Breast epithelium (tissue), 4 donors: ENCODE measurements at regions of chr2 and their contacts with region 1.

Region 1: GRCh38 chr2:11129598-11130449 is 25.4 kb upstream of the SLC66A3 start:
- DNase-seq: peak; percentile 48 to 65
- H3K4me3 ChIP-seq: peak overlapping the region; percentile 17 to 65 (median 55)
- H3K27ac ChIP-seq: peak overlapping the region; percentile 68 to 78
- H3K4me1 ChIP-seq: peaks cover 4 to 8% of the 10 kb centered on the region in 2 donors
- H3K27me3 ChIP-seq: no peaks in the 10 kb centered on the region
- CTCF ChIP-seq: peak in 2 of 3 donors; percentile 22 to 49
- POLR2A ChIP-seq: no peak

Region 2: DNA sequence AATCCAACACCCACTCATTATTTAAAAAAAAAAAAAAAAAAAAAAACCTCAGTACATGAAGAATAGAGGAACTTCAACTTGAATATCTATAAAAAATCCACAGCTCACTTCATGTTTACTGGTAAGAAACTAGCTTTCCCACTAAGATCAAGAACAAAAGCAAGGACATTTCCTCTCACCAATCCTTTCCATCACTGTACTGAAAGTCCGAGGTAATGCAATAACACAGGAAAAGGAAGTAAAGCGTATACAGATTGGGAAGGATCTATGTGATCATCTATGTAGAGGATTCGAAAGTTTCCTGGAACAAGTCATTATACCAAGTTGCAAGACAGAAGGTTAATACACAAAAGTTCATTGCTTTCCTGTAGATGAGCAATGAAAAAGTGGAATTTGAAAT is 151.4 kb after region 1 on chr2:
- intact Hi-C with region 1: no loop called
- DNase-seq: no peak
- H3K4me3 ChIP-seq: no peak overlapping the region
- H3K27ac ChIP-seq: no peak overlapping the region
- H3K4me1 ChIP-seq: no peaks in the 10 kb centered on the region
- H3K27me3 ChIP-seq: no peaks in the 10 kb centered on the region
- CTCF ChIP-seq: no peak
- POLR2A ChIP-seq: no peak

Region 3: DNA sequence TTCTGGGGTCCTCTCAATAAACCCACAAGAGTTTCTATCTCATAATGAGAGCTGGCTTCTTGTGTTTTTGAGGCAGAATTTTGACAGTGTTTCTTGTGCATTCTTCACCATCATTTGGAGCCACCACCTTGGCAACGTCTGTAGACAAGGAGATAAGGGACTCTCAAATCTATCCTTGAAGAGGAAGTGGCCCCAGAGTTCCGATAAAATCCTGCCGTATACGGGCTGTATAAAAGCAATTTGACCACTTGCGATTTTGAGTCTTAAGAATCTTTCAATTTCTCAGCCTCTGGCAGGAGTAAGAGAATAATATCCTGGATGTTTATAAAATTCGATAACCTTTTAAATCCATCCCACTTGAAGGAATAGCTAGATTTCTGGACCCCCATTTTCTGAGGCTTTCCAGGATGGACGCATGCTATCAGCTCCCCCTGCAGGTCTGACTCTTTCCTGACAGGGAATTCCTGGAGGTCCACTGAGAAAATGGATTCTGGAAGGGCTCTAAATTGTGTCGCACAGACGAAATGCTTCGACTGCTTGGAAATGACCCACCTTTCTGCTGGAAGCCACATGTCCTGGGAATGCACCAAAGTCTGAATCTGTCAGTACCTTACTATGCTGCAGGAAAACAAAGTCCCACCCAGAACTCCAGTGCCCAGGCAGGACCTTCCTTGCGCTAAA is 282.1 kb after region 1 on chr2:
- intact Hi-C with region 1: loop called (anchors 10 kb)
- DNase-seq: no peak
- H3K4me3 ChIP-seq: peak overlapping the region; percentile 27 to 53 (median 33)
- H3K27ac ChIP-seq: no peak overlapping the region
- H3K4me1 ChIP-seq: no peaks in the 10 kb centered on the region
- H3K27me3 ChIP-seq: no peaks in the 10 kb centered on the region
- CTCF ChIP-seq: peak; percentile 43 to 76 (median 68)
- POLR2A ChIP-seq: no peak